ENCODE measurements at regions of chr14 and their contacts with region 1.

Region 1: GRCh38 chr14:95495538-95496025 is 20.9 kb downstream of the SYNE3 start:
- DNase-seq: peak; percentile 60
- ATAC-seq: peak; percentile 87
- H3K4me3 Mint-ChIP-seq: peak overlapping the region; percentile 62
- H3K27ac Mint-ChIP-seq: peak overlapping the region; percentile 91
- H3K4me1 Mint-ChIP-seq: peaks cover 86% of the 10 kb centered on the region
- H3K27me3 Mint-ChIP-seq: no peaks in the 10 kb centered on the region
- CTCF ChIP-seq: no peak

Region 2: GRCh38 chr14:95255487-95255886 is 240.1 kb before region 1 on chr14:
- CTCF ChIA-PET with region 1: no interaction called
- POLR2A ChIA-PET with region 1: no interaction called
- intact Hi-C with region 1: no loop called
- DNase-seq: no peak
- ATAC-seq: no peak
- H3K4me3 Mint-ChIP-seq: no peak overlapping the region
- H3K27ac Mint-ChIP-seq: no peak overlapping the region
- H3K4me1 Mint-ChIP-seq: peaks cover 14% of the 10 kb centered on the region
- H3K27me3 Mint-ChIP-seq: no peaks in the 10 kb centered on the region
- CTCF ChIP-seq: no peak

Region 3: GRCh38 chr14:95460647-95461478 is 34.7 kb before region 1 on chr14:
- CTCF ChIA-PET with region 1: no interaction called
- POLR2A ChIA-PET with region 1: interaction called, 8 read pairs
- intact Hi-C with region 1: loop called (anchors 5 kb)
- DNase-seq: no peak
- ATAC-seq: no peak
- H3K4me3 Mint-ChIP-seq: no peak overlapping the region
- H3K27ac Mint-ChIP-seq: no peak overlapping the region
- H3K4me1 Mint-ChIP-seq: peaks cover 65% of the 10 kb centered on the region
- H3K27me3 Mint-ChIP-seq: no peaks in the 10 kb centered on the region
- CTCF ChIP-seq: no peak

Region 4: DNA sequence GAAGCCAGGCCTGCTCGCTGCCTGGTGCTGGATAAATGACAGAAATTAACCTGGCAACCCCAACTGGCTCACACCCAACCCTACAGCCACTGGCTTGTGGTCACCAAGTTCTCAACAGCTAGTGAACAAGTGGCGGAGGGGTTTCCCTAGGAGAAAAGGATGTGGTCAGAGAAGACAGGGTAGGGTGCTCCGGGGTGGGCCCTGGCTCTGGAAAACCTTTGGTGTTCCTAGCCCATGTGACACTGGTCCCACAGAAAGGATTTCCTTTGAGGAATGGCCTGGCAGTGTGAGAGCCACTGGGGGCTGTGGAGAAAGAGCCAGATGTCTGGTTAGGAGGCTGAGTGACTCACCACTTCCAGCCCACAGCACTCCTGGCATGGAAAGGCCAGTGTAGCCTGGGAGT is 12.1 kb after region 1 on chr14:
- CTCF ChIA-PET with region 1: interaction called, 3 read pairs
- POLR2A ChIA-PET with region 1: interaction called, 85 read pairs
- intact Hi-C with region 1: loop called (anchors 1 kb)
- DNase-seq: no peak
- ATAC-seq: no peak
- H3K4me3 Mint-ChIP-seq: no peak overlapping the region
- H3K27ac Mint-ChIP-seq: no peak overlapping the region
- H3K4me1 Mint-ChIP-seq: peaks cover 89% of the 10 kb centered on the region
- H3K27me3 Mint-ChIP-seq: no peaks in the 10 kb centered on the region
- CTCF ChIP-seq: no peak